ENCODE measurements at regions of chr4 and their contacts with region 1.

Region 1: GRCh38 chr4:52606726-52607125 is 52.4 kb downstream of the USP46 start:
- DNase-seq: no peak
- H3K4me3 ChIP-seq: no peak overlapping the region
- H3K27ac ChIP-seq: no peak overlapping the region
- H3K4me1 ChIP-seq: peaks cover 4 to 7% of the 10 kb centered on the region in 2 donors
- H3K27me3 ChIP-seq: no peaks in the 10 kb centered on the region
- CTCF ChIP-seq: no peak
- POLR2A ChIP-seq: no peak

Region 2: DNA sequence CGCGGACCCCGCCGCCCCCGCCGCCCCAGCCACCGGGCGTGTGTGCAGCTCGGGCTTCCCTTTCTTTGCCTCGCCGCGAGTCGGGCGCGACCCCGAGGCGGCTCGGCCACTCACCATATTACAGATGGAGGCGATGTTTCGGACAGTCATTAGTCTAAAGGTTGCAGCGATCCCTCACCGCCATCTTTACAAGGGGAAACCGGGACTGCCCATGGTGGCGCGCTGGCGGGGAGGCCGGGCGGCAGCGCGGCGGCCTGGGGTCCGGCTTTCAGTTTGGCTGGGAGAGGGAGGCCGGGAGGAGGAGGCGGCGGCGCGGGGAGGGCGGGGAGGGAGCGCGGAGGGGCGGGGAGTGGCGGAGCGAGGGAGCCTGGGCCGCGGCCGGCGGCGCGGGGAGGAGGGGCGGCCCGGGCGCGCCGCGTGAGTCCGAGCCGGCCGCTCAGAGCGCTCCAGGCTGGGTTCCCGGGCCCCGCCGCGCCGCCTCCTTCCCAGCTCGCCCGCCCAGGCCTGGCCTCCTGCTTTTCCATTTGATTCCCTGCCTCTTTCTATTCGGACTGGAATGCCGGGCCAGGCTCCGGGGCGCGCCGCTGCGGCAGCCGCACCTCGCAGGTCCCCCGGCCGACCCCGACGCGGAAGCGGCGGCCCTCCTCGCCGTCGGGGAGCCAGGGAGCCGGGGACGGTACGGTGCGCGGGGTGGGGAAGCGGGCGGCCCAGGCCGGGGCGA is 52.4 kb after region 1 on chr4 and contains the start of gene USP46:
- intact Hi-C with region 1: loop called in 1 of 2 experiments (anchors 10 kb)
- DNase-seq: peak; percentile 80 to 83 (median 81)
- H3K4me3 ChIP-seq: peak within 1 kb of the TSS; percentile 56 to 99 (median 70)
- H3K27ac ChIP-seq: peak within 1 kb of the TSS; percentile 81 to 97 (median 93)
- H3K4me1 ChIP-seq: peaks cover 11 to 29% of the 10 kb centered on the region in 2 donors
- H3K27me3 ChIP-seq: no peaks in the 10 kb centered on the region
- CTCF ChIP-seq: no peak
- POLR2A ChIP-seq: peak in 1 of 2 donors; percentile 82
- total RNA-seq, gene USP46: 12.1 to 37.5 (median 21.0) TPM

Region 3: GRCh38 chr4:52751487-52751911 is 144.8 kb after region 1 on chr4:
- intact Hi-C with region 1: no loop called
- DNase-seq: peak; percentile 70 to 82 (median 74)
- H3K4me3 ChIP-seq: peak overlapping the region in 3 of 4 donors; percentile 7 to 80 (median 14)
- H3K27ac ChIP-seq: peak overlapping the region in 1 of 5 donors; percentile 13
- H3K4me1 ChIP-seq: peaks cover 4 to 10% of the 10 kb centered on the region in 2 donors
- H3K27me3 ChIP-seq: no peaks in the 10 kb centered on the region
- CTCF ChIP-seq: no peak
- POLR2A ChIP-seq: no peak

Measured in adrenal gland (tissue), 19 donors.